Activated CD4-positive, alpha-beta T cell treated with anti-CD3 and anti-CD28 coated beads, Interleukin-2, amount 10 ng/mL, durations not matched to agents 24 days and 14 days (primary cell): ENCODE measurements at regions of chr11 and their contacts with region 1.

Region 1: DNA sequence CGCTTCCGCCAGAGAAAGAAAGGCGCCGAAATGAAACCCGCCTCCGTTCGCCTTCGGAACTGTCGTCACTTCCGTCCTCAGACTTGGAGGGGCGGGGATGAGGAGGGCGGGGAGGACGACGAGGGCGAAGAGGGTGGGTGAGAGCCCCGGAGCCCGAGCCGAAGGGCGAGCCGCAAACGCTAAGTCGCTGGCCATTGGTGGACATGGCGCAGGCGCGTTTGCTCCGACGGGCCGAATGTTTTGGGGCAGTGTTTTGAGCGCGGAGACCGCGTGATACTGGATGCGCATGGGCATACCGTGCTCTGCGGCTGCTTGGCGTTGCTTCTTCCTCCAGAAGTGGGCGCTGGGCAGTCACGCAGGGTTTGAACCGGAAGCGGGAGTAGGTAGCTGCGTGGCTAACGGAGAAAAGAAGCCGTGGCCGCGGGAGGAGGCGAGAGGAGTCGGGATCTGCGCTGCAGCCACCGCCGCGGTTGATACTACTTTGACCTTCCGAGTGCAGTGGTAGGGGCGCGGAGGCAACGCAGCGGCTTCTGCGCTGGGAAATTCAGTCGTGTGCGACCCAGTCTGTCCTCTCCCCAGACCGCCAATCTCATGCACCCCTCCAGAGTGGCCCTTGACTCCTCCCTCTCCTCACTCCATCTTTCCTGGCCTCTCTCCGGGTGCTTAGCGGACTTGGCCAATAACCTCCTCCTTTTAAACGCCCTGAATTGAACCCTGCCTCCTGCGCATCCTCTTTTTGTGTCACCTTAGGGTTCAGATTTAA is at the start of gene ATM:
- DNase-seq: peak; percentile 99
- H3K4me3 Mint-ChIP-seq: no peak within 1 kb of the TSS
- H3K27ac Mint-ChIP-seq: no peak within 1 kb of the TSS
- H3K4me1 Mint-ChIP-seq: peaks cover 56% of the 10 kb centered on the region
- H3K27me3 Mint-ChIP-seq: no peaks in the 10 kb centered on the region
- total RNA-seq, gene ATM: 37.6 and 42.5 TPM in 2 replicates

Region 2: GRCh38 chr11:107858217-107859070 is 364.4 kb before region 1 on chr11 and contains the start of gene SLC35F2:
- intact Hi-C with region 1: loop called (anchors 2 kb)
- DNase-seq: peak; percentile 92
- H3K4me3 Mint-ChIP-seq: peak within 1 kb of the TSS; percentile 90
- H3K27ac Mint-ChIP-seq: peak within 1 kb of the TSS; percentile 93
- H3K4me1 Mint-ChIP-seq: peaks cover 25% of the 10 kb centered on the region
- H3K27me3 Mint-ChIP-seq: peaks cover 4% of the 10 kb centered on the region
- total RNA-seq, gene SLC35F2: 31.9 and 35.1 TPM in 2 replicates

Region 3: GRCh38 chr11:108135845-108136544 is 86.9 kb before region 1 on chr11:
- intact Hi-C with region 1: loop called (anchors 2 kb)
- DNase-seq: peak; percentile 71
- H3K4me3 Mint-ChIP-seq: no peak overlapping the region
- H3K27ac Mint-ChIP-seq: peak overlapping the region; percentile 77
- H3K4me1 Mint-ChIP-seq: peaks cover 9% of the 10 kb centered on the region
- H3K27me3 Mint-ChIP-seq: no peaks in the 10 kb centered on the region

Region 4: GRCh38 chr11:108177570-108177969 is 45.3 kb before region 1 on chr11:
- intact Hi-C with region 1: no loop called
- DNase-seq: no peak
- H3K4me3 Mint-ChIP-seq: no peak overlapping the region
- H3K27ac Mint-ChIP-seq: no peak overlapping the region
- H3K4me1 Mint-ChIP-seq: no peaks in the 10 kb centered on the region
- H3K27me3 Mint-ChIP-seq: no peaks in the 10 kb centered on the region

Region 5: DNA sequence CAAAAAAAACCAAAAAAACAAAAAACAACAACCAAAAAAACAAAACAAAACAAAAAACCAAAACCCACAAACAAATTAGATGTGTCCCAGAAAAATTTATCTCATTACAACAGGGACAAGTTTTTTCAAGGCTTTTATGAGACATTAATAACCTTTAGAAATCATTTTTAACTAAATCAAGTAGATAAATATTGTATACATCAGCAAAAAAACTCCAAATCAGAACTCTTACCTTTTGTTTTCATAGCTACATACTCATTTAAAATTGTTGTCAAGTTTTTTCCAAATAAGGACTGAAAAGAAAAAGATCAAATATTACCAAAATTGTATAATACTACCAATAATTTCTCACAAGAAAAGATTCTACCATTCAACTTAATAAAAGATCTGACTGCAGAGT is 29.1 kb before region 1 on chr11:
- intact Hi-C with region 1: no loop called
- DNase-seq: no peak
- H3K4me3 Mint-ChIP-seq: no peak overlapping the region
- H3K27ac Mint-ChIP-seq: no peak overlapping the region
- H3K4me1 Mint-ChIP-seq: peaks cover 16% of the 10 kb centered on the region
- H3K27me3 Mint-ChIP-seq: no peaks in the 10 kb centered on the region

Region 6: DNA sequence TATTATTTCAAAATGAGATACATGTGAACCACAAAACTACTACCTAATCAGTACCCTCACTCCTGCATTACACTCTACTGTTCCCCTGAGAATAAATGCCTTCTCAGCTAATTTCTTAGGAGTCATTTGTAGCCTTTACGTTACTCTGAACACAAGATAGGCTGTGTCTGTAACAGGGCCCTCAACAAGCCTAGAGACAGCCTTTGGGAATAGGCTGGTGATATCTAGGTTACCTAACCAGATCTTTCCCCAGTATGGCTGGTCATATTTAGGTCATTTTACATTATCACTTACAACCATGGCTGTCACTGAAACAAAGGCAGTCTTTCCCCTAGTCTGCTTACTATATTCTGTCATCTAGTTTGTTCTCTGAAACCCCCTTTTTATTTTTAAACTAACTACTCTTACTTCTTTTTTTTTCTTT is 14.2 kb after region 1 on chr11:
- intact Hi-C with region 1: loop called (anchors 1 kb)
- DNase-seq: peak; percentile 68
- H3K4me3 Mint-ChIP-seq: peak overlapping the region; percentile 63
- H3K27ac Mint-ChIP-seq: peak overlapping the region; percentile 87
- H3K4me1 Mint-ChIP-seq: peaks cover 51% of the 10 kb centered on the region
- H3K27me3 Mint-ChIP-seq: no peaks in the 10 kb centered on the region

Region 7: GRCh38 chr11:108593214-108593922 is 370.5 kb after region 1 on chr11 and contains the start of gene EXPH5:
- intact Hi-C with region 1: loop called (anchors 1 kb)
- DNase-seq: peak; percentile 95
- H3K4me3 Mint-ChIP-seq: peak within 1 kb of the TSS; percentile 91
- H3K27ac Mint-ChIP-seq: peak within 1 kb of the TSS; percentile 85
- H3K4me1 Mint-ChIP-seq: peaks cover 16% of the 10 kb centered on the region
- H3K27me3 Mint-ChIP-seq: peaks cover 49% of the 10 kb centered on the region
- total RNA-seq, gene EXPH5: 0.90 and 0.91 TPM in 2 replicates

Region 8: GRCh38 chr11:108664730-108665525 is 442.1 kb after region 1 on chr11 and contains the start of gene DDX10:
- intact Hi-C with region 1: loop called (anchors 5 kb)
- DNase-seq: peak; percentile 100
- H3K4me3 Mint-ChIP-seq: peak within 1 kb of the TSS; percentile 97
- H3K27ac Mint-ChIP-seq: peak within 1 kb of the TSS; percentile 99
- H3K4me1 Mint-ChIP-seq: peaks cover 38% of the 10 kb centered on the region
- H3K27me3 Mint-ChIP-seq: peaks cover 10% of the 10 kb centered on the region
- total RNA-seq, gene DDX10: 68.9 and 71.6 TPM in 2 replicates